ENCODE measurements at regions of chr1 and their contacts with region 1.

Region 1: GRCh38 chr1:53196485-53197270 is at the start of gene CPT2:
- DNase-seq: peak; percentile 99
- total RNA-seq, gene CPT2: 9.6 to 16.6 TPM

Region 2: GRCh38 chr1:53061859-53062707 is 134.6 kb before region 1 on chr1 and contains the start of gene PODN:
- intact Hi-C with region 1: no loop called
- DNase-seq: peak; percentile 89
- total RNA-seq, gene PODN: 155 to 285 TPM

Region 3: GRCh38 chr1:53220171-53220961 is 23.7 kb after region 1 on chr1 and contains the start of gene CZIB:
- intact Hi-C with region 1: loop called in 1 of 2 experiments (anchors 1 kb)
- DNase-seq: peak; percentile 99
- total RNA-seq, gene CZIB: 49.4 to 72.5 TPM